K562 (cell line): ENCODE measurements at regions of chr3 and their contacts with region 1.

Region 1: GRCh38 chr3:43638594-43639447 is 17.0 kb upstream of the ANO10 start:
- DNase-seq: peak; percentile 66 to 92 (median 75)
- ATAC-seq: peak; percentile 90
- H3K4me3 ChIP-seq: 0 out of 2 replicates have a peak overlapping the region, but pooled peaks have one; percentile 1
- H3K27ac ChIP-seq: peak overlapping the region; percentile 67
- H3K4me1 ChIP-seq: peaks cover 10 to 24% of the 10 kb centered on the region in 2 experiments; a peak in 4 of 5 replicates
- H3K27me3 ChIP-seq: no peaks in the 10 kb centered on the region
- CTCF ChIP-seq: peak; percentile 88 to 97 (median 92)
- EP300 ChIP-seq: peak; percentile 45
- POLR2A ChIP-seq: no peak
- RAD21 ChIP-seq: peak; percentile 89 to 97

Region 2: GRCh38 chr3:43162230-43163084 is 476.4 kb before region 1 on chr3:
- CTCF ChIA-PET with region 1: no interaction called
- POLR2A ChIA-PET with region 1: no interaction called
- in situ Hi-C with region 1: no loop called
- intact Hi-C with region 1: loop called (anchors 5 kb)
- DNase-seq: peak in 1 of 4 experiments; percentile 27
- ATAC-seq: peak; percentile 70; the same call in 1 of the 3 replicates
- H3K4me3 ChIP-seq: no peak overlapping the region
- H3K27ac ChIP-seq: no peak overlapping the region
- H3K4me1 ChIP-seq: no peaks in the 10 kb centered on the region
- H3K27me3 ChIP-seq: peaks cover 2 to 23% of the 10 kb centered on the region in 2 experiments; a peak in 2 of 5 replicates
- CTCF ChIP-seq: peak in 2 of 3 experiments; percentile 38 to 51; a peak in 2 of 6 replicates
- EP300 ChIP-seq: no peak
- POLR2A ChIP-seq: no peak
- RAD21 ChIP-seq: peak; percentile 72 to 73

Region 3: GRCh38 chr3:43549626-43550290 is 89.1 kb before region 1 on chr3:
- CTCF ChIA-PET with region 1: interaction called, 5 read pairs
- POLR2A ChIA-PET with region 1: no interaction called
- in situ Hi-C with region 1: loop called (anchors 5 kb)
- intact Hi-C with region 1: loop called (anchors 1 kb)
- DNase-seq: no peak
- ATAC-seq: no peak
- H3K4me3 ChIP-seq: no peak overlapping the region
- H3K27ac ChIP-seq: no peak overlapping the region
- H3K4me1 ChIP-seq: no peaks in the 10 kb centered on the region
- H3K27me3 ChIP-seq: no peaks in the 10 kb centered on the region
- CTCF ChIP-seq: no peak
- EP300 ChIP-seq: no peak
- POLR2A ChIP-seq: no peak
- RAD21 ChIP-seq: no peak